T-cell (primary cell): ENCODE measurements at regions of chr14 and their contacts with region 1.

Region 1: GRCh38 chr14:24135834-24136542 is at the start of gene PSME1:
- DNase-seq: peak; percentile 80 to 97 (median 92)
- ATAC-seq: peak; percentile 94 to 98 (median 95)
- H3K4me3 ChIP-seq: peak within 1 kb of the TSS; percentile 78 to 84
- H3K4me3 Mint-ChIP-seq: peak within 1 kb of the TSS; percentile 89 to 97 (median 91)
- H3K27ac ChIP-seq: peak within 1 kb of the TSS; percentile 79
- H3K27ac Mint-ChIP-seq: peak within 1 kb of the TSS; percentile 91 to 95
- H3K4me1 ChIP-seq: peaks cover 22 to 67% of the 10 kb centered on the region in 2 experiments
- H3K4me1 Mint-ChIP-seq: peaks cover 65 to 68% (median 67%) of the 10 kb centered on the region in 3 donors
- H3K27me3 ChIP-seq: no peaks in the 10 kb centered on the region
- H3K27me3 Mint-ChIP-seq: no peaks in the 10 kb centered on the region
- total RNA-seq, gene PSME1: 221 to 291 (median 259) TPM

Region 2: DNA sequence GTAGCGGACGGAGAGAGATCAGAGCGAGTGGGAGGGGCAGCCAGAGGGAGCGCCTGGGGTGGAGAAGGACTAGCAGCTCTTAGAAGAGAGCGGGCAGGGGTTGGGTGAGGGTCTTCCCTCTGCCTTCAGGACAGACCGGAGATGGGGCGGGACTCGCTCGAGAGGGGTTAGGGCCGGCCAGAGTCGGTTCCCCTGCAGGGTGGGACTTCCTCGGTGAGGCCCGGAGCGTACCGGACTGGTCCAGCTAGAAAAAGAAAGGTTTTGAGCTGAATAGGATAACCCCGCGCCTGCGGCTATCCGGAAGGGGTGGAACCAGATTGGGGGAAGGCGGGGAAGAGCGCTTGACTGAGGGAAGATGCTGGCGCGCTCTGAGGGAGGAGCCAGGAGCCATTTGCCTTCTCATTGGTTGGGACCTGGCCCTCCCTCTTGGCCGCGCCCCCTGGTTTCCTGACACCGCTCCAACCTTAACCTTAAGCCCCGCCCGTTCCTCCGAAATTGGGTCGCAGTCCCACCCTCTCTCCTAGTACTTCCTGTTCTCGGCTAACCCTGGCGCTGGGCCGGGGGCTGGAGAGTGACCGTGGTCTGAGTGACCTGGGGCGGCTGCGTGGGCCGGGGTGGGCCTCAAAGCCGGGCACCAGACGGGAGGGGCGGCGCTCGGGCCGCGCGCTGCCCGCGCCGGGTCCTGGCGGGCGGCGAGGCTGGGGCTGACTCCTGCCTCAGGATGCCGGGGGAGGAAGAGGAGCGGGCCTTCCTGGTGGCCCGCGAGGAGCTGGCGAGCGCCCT is 11.2 kb after region 1 on chr14 and contains the start of gene RNF31:
- CTCF ChIA-PET with region 1: interaction called, 3 to 15 read pairs
- POLR2A ChIA-PET with region 1: interaction called, 4 to 5 read pairs
- DNase-seq: peak; percentile 90 to 99 (median 97)
- ATAC-seq: peak; percentile 89 to 93 (median 90)
- H3K4me3 ChIP-seq: peak within 1 kb of the TSS; percentile 69 to 91
- H3K4me3 Mint-ChIP-seq: peak within 1 kb of the TSS; percentile 96 to 99 (median 97)
- H3K27ac ChIP-seq: peak within 1 kb of the TSS; percentile 82
- H3K27ac Mint-ChIP-seq: peak within 1 kb of the TSS; percentile 95 to 99
- H3K4me1 ChIP-seq: peaks cover 17 to 58% of the 10 kb centered on the region in 2 experiments
- H3K4me1 Mint-ChIP-seq: peaks cover 64 to 69% (median 66%) of the 10 kb centered on the region in 3 donors
- H3K27me3 ChIP-seq: no peaks in the 10 kb centered on the region
- H3K27me3 Mint-ChIP-seq: no peaks in the 10 kb centered on the region
- total RNA-seq, gene RNF31: 67.7 to 131 (median 100) TPM

Region 3: GRCh38 chr14:24481622-24482324 is 345.8 kb after region 1 on chr14:
- CTCF ChIA-PET with region 1: no interaction called
- POLR2A ChIA-PET with region 1: no interaction called
- DNase-seq: peak in 26 of 35 experiments; percentile 7 to 49 (median 24)
- ATAC-seq: peak in 3 of 4 experiments; percentile 58 to 70 (median 61)
- H3K4me3 ChIP-seq: peak overlapping the region in 1 of 2 donors; percentile 1
- H3K4me3 Mint-ChIP-seq: peak overlapping the region in 2 of 3 donors; percentile 61 to 66
- H3K27ac ChIP-seq: no peak overlapping the region
- H3K27ac Mint-ChIP-seq: peak overlapping the region; percentile 44 to 59
- H3K4me1 ChIP-seq: peaks cover 16 to 21% of the 10 kb centered on the region in 2 experiments
- H3K4me1 Mint-ChIP-seq: peaks cover 20 to 30% (median 24%) of the 10 kb centered on the region in 3 donors
- H3K27me3 ChIP-seq: peaks cover 0 to 3% of the 10 kb centered on the region in 2 experiments
- H3K27me3 Mint-ChIP-seq: no peaks in the 10 kb centered on the region